ENCODE measurements at regions of chr11 and their contacts with region 1.

Region 1: DNA sequence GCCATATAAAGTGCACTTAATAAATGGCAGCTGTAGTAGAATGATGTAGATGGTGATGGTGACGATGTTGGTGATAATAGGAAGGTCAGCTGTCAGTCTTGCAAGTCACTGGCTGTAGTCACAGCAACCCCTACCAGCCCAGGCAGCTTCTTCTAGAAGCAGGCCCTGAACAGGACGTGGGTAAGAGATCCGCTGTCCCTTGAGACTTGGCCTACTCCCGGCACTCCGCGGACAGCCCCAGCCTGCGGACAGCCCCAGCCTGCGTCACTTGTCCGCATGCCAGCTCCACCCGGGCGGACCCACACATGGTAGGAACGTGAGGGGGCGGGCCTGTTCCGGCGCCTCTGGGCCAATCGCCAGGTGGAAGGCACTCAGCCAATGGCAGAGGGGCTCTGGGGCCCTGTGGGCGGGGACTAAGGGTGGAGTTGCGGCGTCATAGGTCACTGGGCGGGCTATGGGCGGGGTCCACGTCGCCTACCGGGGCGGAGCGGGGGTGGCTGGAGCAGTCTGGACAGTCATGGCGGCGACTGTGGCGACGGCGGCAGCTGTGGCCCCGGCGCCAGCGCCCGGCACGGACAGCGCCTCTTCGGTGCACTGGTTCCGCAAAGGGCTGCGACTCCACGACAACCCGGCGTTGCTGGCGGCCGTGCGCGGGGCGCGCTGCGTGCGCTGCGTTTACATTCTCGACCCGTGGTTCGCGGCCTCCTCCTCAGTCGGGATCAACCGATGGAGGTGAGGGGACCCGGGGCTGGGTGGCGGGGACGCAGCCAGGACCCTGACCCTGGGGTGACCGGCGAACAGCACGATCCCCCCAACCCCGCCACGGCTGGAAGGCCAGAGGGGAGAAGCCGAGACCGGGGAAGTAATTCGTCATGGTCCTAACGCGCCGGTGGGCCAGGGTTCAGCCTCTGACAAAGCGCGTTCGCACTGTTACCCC is at the start of gene CRY2:
- DNase-seq: peak; percentile 98
- H3K4me3 Mint-ChIP-seq: peak within 1 kb of the TSS; percentile 75
- H3K27ac Mint-ChIP-seq: peak within 1 kb of the TSS; percentile 66
- H3K4me1 Mint-ChIP-seq: peaks cover 18% of the 10 kb centered on the region
- H3K27me3 Mint-ChIP-seq: peaks cover 11% of the 10 kb centered on the region
- CTCF ChIP-seq: no peak
- total RNA-seq, gene CRY2: 8.1 and 8.6 TPM in 2 replicates

Region 2: DNA sequence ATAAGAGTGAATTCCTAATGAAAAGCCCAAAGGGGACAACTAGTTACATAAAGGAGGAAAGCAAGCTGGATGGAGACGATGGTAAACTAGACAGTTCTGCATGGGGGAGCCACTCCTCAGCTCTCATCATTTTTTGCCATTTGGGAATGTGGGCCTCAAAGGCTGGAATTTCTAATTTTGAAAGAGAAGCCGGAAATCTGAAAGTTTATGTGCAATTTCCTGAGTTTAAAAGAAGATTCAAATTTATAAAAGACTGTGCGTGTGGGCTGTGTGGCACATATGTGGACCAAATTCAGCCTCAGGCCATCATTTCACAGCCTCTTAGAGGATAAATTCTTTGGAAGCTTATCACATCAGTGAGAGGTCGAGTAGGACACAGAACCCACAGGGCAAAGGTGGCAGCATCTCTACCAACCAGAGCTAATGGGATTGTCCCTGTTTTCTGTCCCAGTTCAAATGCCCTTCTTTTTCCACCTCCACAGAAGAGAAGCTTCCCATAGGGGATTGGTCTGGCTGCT is 18.2 kb before region 1 on chr11:
- CTCF ChIA-PET with region 1: interaction called, 15 read pairs
- POLR2A ChIA-PET with region 1: interaction called, 7 read pairs
- intact Hi-C with region 1: no loop called
- DNase-seq: no peak
- H3K4me3 Mint-ChIP-seq: no peak overlapping the region
- H3K27ac Mint-ChIP-seq: no peak overlapping the region
- H3K4me1 Mint-ChIP-seq: peaks cover 5% of the 10 kb centered on the region
- H3K27me3 Mint-ChIP-seq: peaks cover 35% of the 10 kb centered on the region
- CTCF ChIP-seq: no peak

Region 3: DNA sequence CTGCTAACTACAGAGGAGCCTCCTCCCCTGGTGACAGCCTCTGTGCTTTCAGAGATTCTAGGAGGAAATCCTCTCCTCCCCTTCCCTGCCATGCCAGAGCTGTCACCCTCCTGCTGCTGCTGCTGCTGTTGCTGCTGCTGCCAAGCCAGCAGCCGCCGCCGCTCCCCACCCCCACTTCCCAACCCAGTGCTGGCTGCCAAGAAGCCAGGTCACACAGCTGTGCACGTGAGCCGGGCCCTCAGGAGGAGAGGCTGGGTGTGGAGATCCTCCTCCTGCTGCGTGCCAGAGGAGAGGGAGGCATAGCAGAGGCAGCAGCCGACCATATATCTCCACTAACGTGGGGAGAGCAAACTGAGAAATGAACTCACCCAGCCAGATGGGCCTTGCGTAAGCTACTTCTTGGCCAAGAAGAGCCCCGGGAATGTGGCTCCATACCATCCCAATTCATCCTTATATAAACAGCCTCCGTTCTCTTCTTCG is 12.5 kb after region 1 on chr11:
- CTCF ChIA-PET with region 1: interaction called, 23 read pairs
- POLR2A ChIA-PET with region 1: interaction called, 24 read pairs
- intact Hi-C with region 1: loop called (anchors 1 kb)
- DNase-seq: peak; percentile 92
- H3K4me3 Mint-ChIP-seq: no peak overlapping the region
- H3K27ac Mint-ChIP-seq: peak overlapping the region; percentile 8
- H3K4me1 Mint-ChIP-seq: peaks cover 19% of the 10 kb centered on the region
- H3K27me3 Mint-ChIP-seq: no peaks in the 10 kb centered on the region
- CTCF ChIP-seq: no peak

Region 4: DNA sequence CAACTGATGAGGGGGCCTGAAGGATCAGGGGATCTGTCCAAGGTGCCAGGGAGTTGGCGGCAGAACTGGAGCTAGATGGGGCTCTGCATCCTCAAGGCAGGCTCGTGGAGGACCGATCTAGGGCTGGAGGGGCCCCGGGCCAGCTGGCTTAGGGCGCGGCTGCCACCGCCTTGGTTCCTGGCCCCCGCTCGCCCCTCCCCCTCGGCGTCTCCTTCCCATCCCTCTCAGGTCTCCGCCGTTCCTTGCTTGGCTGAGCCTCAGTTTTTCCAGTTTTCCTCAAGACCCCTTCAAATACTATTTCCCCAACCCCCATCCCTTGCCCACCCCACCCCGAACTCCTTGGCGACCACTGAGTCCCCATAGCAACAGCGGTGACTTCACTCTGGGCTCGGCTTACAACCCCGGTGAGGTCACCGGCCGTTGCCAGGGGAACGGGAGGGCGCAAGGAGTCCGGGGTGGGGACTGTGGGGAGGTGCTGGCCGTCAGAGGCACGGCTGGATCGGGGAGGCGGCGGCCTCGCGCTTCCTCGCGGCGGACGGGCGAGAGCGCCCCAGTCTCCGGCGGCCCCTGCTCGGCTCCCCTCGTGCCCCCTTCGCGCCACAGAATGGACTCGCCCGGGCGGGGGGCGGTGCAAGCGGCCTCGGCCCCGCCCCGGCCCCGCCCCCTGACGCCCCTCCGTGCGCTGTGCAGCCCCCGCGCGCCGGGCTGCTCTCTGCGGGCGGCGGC is 52.4 kb after region 1 on chr11:
- CTCF ChIA-PET with region 1: interaction called, 5 read pairs
- POLR2A ChIA-PET with region 1: interaction called, 6 read pairs
- intact Hi-C with region 1: loop called (anchors 10 kb)
- DNase-seq: peak; percentile 64
- H3K4me3 Mint-ChIP-seq: peak overlapping the region; percentile 47
- H3K27ac Mint-ChIP-seq: peak overlapping the region; percentile 39
- H3K4me1 Mint-ChIP-seq: peaks cover 8% of the 10 kb centered on the region
- H3K27me3 Mint-ChIP-seq: no peaks in the 10 kb centered on the region
- CTCF ChIP-seq: no peak

Region 5: DNA sequence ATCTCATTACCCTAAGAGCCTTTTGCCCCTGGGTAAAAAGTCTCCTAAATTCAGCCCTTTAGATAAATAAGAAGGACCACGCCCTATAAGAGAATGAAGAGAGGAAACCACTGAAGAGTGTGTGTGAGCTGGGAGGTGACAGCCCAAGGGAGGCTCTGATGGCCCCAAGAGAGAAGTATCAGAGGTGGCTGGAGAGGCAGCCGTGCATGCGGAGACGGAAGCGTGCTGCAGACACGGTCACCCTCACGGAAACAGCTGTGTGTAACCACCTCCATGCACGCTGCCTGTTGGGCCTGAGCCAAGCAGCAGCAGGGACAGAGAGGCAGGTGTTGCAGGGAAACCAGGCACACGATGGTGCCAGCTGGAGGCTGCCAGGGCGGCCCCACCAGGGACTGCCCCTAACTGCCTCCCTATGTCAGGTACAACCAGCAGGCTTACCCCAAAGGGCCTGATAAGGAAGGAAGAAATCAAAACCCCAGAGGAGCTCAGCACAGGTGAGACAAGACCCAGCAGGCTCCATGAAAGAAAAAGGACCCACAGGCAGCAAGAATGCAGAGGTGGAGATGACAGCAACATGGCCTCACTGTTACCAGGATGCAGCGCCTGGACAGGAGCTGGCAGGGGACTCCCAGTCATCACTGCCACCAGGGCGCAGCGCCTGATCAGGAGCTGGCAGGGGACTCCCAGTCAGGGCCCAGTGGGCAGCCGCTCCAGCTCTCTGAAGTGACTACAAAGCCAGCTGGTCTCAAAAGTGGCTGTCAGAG is 83.0 kb after region 1 on chr11:
- CTCF ChIA-PET with region 1: interaction called, 5 read pairs
- POLR2A ChIA-PET with region 1: interaction called, 11 read pairs
- intact Hi-C with region 1: no loop called
- DNase-seq: no peak
- H3K4me3 Mint-ChIP-seq: peak overlapping the region; percentile 8
- H3K27ac Mint-ChIP-seq: peak overlapping the region; percentile 88
- H3K4me1 Mint-ChIP-seq: peaks cover 23% of the 10 kb centered on the region
- H3K27me3 Mint-ChIP-seq: no peaks in the 10 kb centered on the region
- CTCF ChIP-seq: no peak

Region 6: DNA sequence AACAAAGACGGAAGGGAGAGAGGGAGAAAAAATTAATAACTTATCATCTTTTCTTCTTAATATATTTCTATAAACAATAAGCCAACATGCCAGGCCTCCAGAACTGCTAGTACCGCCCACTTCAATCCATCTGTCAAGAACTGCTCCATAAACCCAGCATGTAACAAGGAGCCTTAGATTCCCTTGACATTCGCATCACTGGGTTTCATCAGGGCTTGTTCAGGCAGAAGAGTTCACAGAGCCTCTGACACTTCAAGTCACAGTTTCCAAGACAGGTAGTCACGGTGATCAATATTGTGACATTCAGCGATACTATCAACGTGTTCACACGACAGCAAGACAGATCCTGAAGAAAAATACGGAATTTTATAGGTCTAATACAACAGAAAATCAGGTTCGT is 136.9 kb after region 1 on chr11:
- CTCF ChIA-PET with region 1: no interaction called
- POLR2A ChIA-PET with region 1: no interaction called
- intact Hi-C with region 1: no loop called
- DNase-seq: no peak
- H3K4me3 Mint-ChIP-seq: no peak overlapping the region
- H3K27ac Mint-ChIP-seq: no peak overlapping the region
- H3K4me1 Mint-ChIP-seq: peaks cover 16% of the 10 kb centered on the region
- H3K27me3 Mint-ChIP-seq: no peaks in the 10 kb centered on the region
- CTCF ChIP-seq: no peak

Measured in MCF 10A (cell line).